Activated T-helper 2 cell treated with anti-CD3 and anti-CD28 coated beads, Interferon-gamma antibody, Interleukin-2, Interleukin-4, amounts not matched to agents 10 μg/mL and 5 μg/mL and 100 μg/mL, durations not matched to agents 14 hours and 24 hours and 36 hours (primary cell): ENCODE measurements at regions of chr3 and their contacts with region 1.

Region 1: GRCh38 chr3:47824541-47825473 is 21.9 kb downstream of the DHX30 start:
- DNase-seq: peak; percentile 77
- H3K4me3 Mint-ChIP-seq: peak overlapping the region; percentile 90
- H3K27ac Mint-ChIP-seq: peak overlapping the region; percentile 79
- H3K4me1 Mint-ChIP-seq: peaks cover 29% of the 10 kb centered on the region
- H3K27me3 Mint-ChIP-seq: no peaks in the 10 kb centered on the region

Region 2: GRCh38 chr3:47781685-47782445 is 42.9 kb before region 1 on chr3 and contains the start of gene SMARCC1:
- intact Hi-C with region 1: loop called (anchors 2 kb)
- DNase-seq: peak; percentile 99
- H3K4me3 Mint-ChIP-seq: peak within 1 kb of the TSS; percentile 92
- H3K27ac Mint-ChIP-seq: peak within 1 kb of the TSS; percentile 99
- H3K4me1 Mint-ChIP-seq: peaks cover 17% of the 10 kb centered on the region
- H3K27me3 Mint-ChIP-seq: no peaks in the 10 kb centered on the region
- total RNA-seq, gene SMARCC1: 150 and 166 TPM in 2 replicates

Region 3: DNA sequence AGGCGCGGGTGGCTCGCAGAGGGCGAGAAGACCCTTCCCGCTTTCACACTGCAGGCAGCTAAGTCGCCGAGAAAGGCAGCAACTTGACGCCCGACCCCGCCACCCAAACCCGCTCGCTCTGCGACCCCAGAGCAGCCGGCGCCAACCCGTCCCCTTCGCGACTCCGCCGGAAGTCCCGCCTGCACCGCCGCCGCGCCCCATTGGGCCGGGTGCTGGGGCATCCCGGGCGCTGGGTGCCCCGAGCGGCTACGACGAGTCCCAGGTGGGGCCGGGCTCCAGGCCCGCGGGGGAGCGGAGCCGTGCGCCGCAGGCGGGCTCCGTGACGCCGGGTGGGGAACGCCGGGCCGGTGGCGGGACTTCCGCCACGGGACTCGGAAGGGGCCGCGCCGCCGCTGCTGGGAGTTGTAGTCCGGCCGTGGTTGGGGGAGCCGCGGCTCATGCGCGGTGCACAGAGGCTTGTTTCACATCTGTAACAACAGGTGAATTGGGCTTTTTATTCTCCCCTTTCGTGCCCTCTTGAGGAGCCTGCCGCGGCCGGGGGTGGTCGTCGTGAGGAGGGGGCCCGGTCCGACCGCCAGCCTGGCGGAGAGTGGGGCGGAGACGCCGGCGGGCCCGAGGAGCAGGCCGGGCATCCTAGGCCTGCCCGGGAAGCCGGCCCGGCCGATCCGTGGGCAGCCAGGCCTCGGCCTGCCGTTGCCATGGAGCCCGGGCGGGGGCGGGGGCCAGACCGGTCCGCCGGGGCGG is 21.9 kb before region 1 on chr3 and contains the start of gene DHX30:
- intact Hi-C with region 1: loop called (anchors 1 kb)
- DNase-seq: peak; percentile 81
- H3K4me3 Mint-ChIP-seq: peak within 1 kb of the TSS; percentile 97
- H3K27ac Mint-ChIP-seq: peak within 1 kb of the TSS; percentile 95
- H3K4me1 Mint-ChIP-seq: peaks cover 13% of the 10 kb centered on the region
- H3K27me3 Mint-ChIP-seq: no peaks in the 10 kb centered on the region
- total RNA-seq, gene DHX30: 123 and 126 TPM in 2 replicates

Region 4: DNA sequence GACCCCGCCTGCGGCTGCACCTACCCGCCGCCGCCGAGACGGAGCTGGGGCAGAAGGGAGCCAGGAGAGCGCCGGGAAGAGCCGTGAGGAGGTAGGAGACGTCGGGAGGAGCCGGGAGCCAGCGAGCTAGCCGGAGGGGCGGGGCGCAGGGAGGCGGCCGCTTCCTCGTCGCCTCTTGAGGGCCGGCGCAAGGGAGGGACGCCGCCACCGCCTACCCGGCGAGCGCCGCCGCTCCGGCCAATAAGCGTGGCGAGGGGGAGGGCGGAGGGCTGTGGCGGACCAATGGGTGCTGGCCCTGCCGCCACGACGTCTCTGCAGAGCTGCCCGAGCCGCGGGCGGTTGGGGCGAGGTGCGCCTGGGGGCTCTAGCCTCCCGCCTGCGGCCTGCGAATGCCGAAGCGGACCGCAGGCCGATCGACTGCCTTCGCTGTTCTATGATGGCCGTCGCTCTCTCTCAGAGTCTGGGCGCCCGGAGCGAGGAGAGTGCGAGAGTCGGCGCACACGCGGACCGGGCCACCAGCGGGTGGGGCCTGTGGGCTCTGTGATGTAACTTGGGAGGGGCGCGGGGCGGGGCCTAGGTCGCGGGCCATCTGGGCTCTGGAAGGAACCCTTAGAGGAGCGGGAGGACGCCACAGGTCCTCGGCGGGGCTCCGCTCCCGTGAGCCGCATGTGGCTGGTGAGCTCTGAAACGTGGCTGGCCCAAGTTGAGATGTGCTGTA is 264.1 kb after region 1 on chr3:
- intact Hi-C with region 1: loop called (anchors 1 kb)
- DNase-seq: peak; percentile 94
- H3K4me3 Mint-ChIP-seq: peak overlapping the region; percentile 97
- H3K27ac Mint-ChIP-seq: peak overlapping the region; percentile 97
- H3K4me1 Mint-ChIP-seq: peaks cover 21% of the 10 kb centered on the region
- H3K27me3 Mint-ChIP-seq: peaks cover 2% of the 10 kb centered on the region